MCF 10A (cell line): ENCODE measurements at regions of chr12 and their contacts with region 1.

Region 1: GRCh38 chr12:102095675-102096263 is 24.1 kb downstream of the NUP37 start:
- DNase-seq: peak; percentile 23
- H3K4me3 Mint-ChIP-seq: no peak overlapping the region
- H3K27ac Mint-ChIP-seq: no peak overlapping the region
- H3K4me1 Mint-ChIP-seq: peaks cover 7% of the 10 kb centered on the region
- H3K27me3 Mint-ChIP-seq: no peaks in the 10 kb centered on the region
- CTCF ChIP-seq: peak; percentile 39

Region 2: DNA sequence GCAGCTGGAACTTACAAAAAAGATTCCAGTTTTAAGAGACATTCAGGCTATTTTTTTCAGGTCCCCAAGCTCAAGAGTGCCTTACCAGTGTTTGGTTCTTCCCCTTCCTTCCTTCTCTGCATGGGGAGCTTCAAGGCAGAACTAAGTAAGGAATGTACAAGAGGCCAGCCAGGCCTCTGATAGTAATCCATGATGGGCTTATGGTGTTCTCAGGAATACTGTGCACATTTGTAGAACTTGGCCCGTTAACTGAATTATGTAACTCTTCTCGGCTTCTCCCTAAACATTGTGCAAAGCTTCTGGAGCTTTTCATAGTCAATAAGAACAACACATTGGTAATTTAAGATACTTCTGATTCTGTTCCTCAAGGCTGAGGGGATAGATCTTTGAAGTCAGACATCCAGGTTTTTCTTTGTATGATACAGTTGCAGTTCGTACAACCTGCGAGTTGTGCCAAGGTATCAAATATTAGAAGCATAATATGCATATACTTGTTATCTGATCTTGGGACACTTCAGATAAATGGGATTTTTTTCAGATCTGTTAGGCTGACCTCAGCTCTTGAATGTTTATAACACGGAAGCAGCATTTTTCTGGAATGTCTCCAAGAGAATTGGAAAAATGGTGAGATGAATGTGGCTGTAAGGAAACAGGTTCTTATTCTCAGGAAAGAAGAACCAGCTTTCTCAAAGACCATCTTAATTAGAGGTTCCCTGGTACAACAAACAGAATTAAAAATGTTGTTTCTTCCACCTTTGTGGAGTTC is 1152.6 kb before region 1 on chr12:
- CTCF ChIA-PET with region 1: no interaction called
- POLR2A ChIA-PET with region 1: no interaction called
- intact Hi-C with region 1: no loop called
- DNase-seq: no peak
- H3K4me3 Mint-ChIP-seq: no peak overlapping the region
- H3K27ac Mint-ChIP-seq: no peak overlapping the region
- H3K4me1 Mint-ChIP-seq: no peaks in the 10 kb centered on the region
- H3K27me3 Mint-ChIP-seq: peaks cover 14% of the 10 kb centered on the region
- CTCF ChIP-seq: no peak

Region 3: DNA sequence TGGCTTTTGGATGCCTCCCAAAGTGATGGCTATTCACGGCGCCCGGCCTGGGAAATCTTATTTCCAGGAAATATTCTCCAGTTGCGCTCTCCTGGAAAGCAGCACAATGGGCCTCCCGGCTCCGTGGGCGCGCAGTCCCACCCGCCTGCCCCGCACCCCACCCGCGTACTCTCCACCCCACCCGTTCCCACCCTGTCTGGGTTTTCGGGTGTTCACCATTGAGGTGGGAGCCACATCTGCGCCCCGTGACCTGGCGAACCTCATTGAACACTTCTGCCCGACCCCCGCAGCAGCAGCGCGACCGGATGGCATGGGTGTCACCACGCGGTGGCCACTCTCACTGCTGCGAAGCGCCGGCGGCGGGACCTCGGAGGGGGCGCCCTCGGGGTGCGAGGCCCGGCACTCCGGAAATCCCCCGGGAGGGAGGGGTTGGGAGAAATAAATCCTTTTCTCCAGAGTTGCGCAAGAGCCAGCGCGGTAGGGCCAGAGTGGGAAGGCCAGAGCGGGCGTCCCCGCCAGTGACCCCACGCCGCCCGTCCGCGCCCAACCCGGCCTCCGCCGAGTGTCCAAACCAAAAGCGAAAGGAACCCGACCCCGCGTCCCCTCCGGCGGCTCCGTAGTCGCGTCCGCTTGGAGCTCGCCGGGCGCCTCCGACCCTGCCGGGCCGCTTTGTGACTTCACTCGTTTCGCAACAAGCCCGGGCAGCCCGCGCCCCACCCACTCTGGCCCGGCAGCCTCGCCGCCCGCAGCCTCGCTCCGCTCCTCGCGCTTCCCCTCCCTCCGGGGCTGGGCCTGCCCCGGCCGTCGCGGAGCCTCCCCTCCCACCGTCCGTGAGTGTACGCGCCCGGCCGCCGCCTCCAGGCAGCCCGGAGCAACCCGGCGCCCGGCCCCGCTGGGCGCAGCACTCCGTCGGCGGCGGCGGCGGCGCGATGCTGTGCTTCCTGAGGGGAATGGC is 218.6 kb before region 1 on chr12 and contains the start of gene DRAM1:
- CTCF ChIA-PET with region 1: no interaction called
- POLR2A ChIA-PET with region 1: no interaction called
- intact Hi-C with region 1: no loop called
- DNase-seq: peak; percentile 89
- H3K4me3 Mint-ChIP-seq: peak within 1 kb of the TSS; percentile 82
- H3K27ac Mint-ChIP-seq: peak within 1 kb of the TSS; percentile 85
- H3K4me1 Mint-ChIP-seq: peaks cover 10% of the 10 kb centered on the region
- H3K27me3 Mint-ChIP-seq: no peaks in the 10 kb centered on the region
- CTCF ChIP-seq: no peak
- total RNA-seq, gene DRAM1: 8.7 and 10.1 TPM in 2 replicates

Region 4: GRCh38 chr12:101995684-101996083 is 100.1 kb before region 1 on chr12:
- CTCF ChIA-PET with region 1: no interaction called
- POLR2A ChIA-PET with region 1: no interaction called
- intact Hi-C with region 1: no loop called
- DNase-seq: no peak
- H3K4me3 Mint-ChIP-seq: no peak overlapping the region
- H3K27ac Mint-ChIP-seq: no peak overlapping the region
- H3K4me1 Mint-ChIP-seq: no peaks in the 10 kb centered on the region
- H3K27me3 Mint-ChIP-seq: no peaks in the 10 kb centered on the region
- CTCF ChIP-seq: no peak

Region 5: DNA sequence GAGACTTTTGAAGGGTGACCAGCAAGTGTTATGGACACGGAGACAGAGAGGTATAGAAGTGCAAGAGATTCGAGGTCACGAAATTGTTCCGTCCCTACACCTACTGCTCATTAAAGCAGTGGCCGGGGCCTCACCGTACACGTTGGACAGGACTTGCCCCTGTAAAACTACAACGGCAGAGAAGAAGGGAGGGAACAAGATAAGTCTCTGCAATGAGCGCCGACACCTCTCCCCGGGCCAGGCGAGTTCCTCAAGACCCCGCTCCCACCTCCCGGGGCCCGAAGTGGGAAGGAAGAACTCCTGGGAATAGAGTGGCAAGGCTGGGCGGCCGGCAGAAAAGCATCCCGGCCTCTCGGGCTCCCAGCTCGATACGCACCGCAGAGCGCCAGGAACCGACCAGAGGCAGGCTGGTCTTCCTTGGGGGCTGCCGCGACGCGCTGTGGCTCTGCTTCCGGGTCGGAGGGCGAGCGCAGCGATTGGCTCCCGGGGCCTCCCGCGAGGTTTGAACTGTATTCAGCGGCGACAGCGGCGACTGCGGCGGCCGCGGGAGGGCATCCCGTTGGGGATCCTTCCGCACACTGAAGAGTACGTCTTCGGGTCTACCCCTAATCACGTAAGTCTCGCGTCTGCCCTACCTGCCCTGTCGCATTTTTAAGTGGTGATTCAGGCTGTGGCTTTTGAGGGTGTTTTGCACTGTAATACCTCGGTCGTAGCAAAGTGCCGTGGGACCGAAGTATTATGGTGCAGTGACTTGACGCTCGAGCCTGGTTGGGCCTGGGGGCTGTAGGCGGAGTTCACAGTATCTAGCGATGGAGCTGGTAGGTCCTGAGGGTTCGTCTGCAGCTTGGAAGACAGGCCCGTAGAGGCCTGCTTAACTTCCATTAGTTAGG is 24.1 kb after region 1 on chr12 and contains the starts of genes NUP37 and PARPBP:
- CTCF ChIA-PET with region 1: interaction called, 14 read pairs
- POLR2A ChIA-PET with region 1: interaction called, 3 read pairs
- intact Hi-C with region 1: no loop called
- DNase-seq: peak; percentile 88
- H3K4me3 Mint-ChIP-seq: peak within 1 kb of the TSS; percentile 91
- H3K27ac Mint-ChIP-seq: peak within 1 kb of the TSS; percentile 97
- H3K4me1 Mint-ChIP-seq: peaks cover 16% of the 10 kb centered on the region
- H3K27me3 Mint-ChIP-seq: no peaks in the 10 kb centered on the region
- CTCF ChIP-seq: no peak
- total RNA-seq, gene NUP37: 21.5 and 32.3 TPM in 2 replicates
- total RNA-seq, gene PARPBP: 11.9 and 15.1 TPM in 2 replicates

Region 6: GRCh38 chr12:102740141-102740955 is 644.6 kb after region 1 on chr12:
- CTCF ChIA-PET with region 1: interaction called, 29 read pairs
- POLR2A ChIA-PET with region 1: no interaction called
- intact Hi-C with region 1: loop called (anchors 1 kb)
- DNase-seq: peak; percentile 47
- H3K4me3 Mint-ChIP-seq: no peak overlapping the region
- H3K27ac Mint-ChIP-seq: no peak overlapping the region
- H3K4me1 Mint-ChIP-seq: no peaks in the 10 kb centered on the region
- H3K27me3 Mint-ChIP-seq: no peaks in the 10 kb centered on the region
- CTCF ChIP-seq: peak; percentile 30

Region 7: DNA sequence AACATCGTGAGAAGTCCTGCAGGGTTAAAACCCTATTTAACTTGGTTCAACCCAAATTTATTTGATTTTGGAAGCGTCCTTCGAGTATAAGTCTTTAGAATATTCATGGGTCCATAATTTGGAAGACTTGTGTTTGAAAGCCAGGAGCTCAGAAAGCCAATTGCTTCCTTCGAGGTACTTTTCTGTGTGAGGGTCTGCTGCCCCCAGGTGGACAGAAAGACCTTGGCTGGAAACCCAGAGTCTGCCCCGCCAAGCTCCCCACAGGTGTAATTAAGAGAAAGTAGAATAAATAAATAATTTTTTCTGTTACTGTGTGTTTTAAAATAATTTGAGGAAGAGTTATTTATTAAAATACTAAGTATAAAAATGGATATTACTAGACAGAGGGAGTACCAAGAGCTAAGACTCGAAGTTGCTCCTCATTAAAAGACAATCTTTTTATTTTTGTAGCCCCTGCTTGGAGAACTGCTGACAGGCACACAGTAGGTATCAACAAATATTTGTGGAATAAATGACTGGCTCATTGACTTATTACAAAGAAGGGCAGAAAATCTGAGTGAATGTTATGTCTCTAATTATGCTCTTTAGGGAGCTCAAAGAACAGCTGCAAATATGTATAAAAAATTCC is 715.5 kb after region 1 on chr12:
- CTCF ChIA-PET with region 1: interaction called, 4 read pairs
- POLR2A ChIA-PET with region 1: no interaction called
- intact Hi-C with region 1: loop called (anchors 5 kb)
- DNase-seq: peak; percentile 30
- H3K4me3 Mint-ChIP-seq: no peak overlapping the region
- H3K27ac Mint-ChIP-seq: no peak overlapping the region
- H3K4me1 Mint-ChIP-seq: peaks cover 10% of the 10 kb centered on the region
- H3K27me3 Mint-ChIP-seq: peaks cover 31% of the 10 kb centered on the region
- CTCF ChIP-seq: peak; percentile 44